PC-3 (cell line): ENCODE measurements at regions of chr14 and their contacts with region 1.

Region 1: DNA sequence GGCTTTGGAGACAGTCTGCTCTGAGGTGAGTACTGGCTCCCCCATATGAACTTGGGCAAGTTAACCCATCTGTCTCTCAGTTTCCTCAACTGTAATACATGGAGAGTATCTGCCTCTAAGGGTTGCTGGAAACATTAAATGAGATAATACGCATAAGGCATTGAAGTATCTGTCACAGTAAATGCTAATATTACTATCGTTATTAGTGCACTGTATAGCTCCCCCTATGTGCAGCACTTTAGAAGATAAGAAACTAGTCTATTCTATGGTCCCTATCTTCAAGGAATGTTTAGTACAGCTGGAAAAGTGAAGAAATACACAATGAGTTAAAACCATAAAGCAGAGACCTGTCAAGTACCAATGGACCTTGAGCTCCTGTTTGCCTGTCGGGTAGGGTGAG is 51.7 kb upstream of the CFL2 start:
- DNase-seq: peak; percentile 47
- ATAC-seq: peak; percentile 37; the same call in 1 of the 2 replicates
- H3K4me3 ChIP-seq: no peak overlapping the region
- H3K27ac ChIP-seq: no peak overlapping the region
- H3K4me1 ChIP-seq: no peaks in the 10 kb centered on the region
- H3K27me3 ChIP-seq: no peaks in the 10 kb centered on the region
- CTCF ChIP-seq: peak; percentile 74

Region 2: DNA sequence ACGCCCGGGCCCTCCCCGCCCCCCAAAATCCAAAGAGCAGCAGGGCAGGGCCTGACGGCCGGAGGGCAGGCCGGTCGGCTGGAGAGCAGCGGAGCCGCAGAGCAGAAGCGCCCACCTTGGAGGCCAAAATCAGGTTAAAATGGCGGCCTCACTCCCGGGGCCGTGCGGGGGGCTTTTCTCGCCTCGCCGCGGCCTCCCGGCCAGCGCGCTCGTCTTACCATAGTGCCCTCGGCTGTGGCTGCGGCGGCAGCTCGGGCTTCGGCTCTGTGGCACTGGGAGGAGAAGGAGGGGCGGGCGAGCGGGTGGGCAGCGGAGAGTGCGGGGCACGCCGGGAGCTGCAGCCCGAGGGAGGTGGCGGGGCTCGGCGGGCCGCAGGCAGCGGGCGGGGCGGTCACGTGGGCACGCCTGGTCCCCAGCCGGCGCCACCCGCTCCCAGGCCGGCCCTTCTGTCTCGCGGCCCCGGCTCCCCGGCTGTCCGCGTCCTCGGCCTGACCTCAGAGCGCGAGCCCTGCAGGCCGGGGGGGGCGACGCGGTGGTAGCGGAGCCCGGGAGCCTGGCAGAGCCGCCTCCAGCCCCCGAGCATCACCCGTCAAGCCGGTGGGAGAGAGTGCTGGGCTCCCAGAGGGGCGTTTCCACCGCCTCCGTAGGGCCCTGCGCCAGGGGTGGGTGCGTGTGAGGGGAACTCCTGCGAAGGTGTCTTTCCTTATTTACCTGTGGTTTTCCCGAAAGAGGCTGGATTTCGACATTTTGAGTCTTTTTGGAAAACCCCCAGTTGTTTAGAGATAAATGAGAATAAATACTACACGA is 51.5 kb before region 1 on chr14 and contains the start of gene CFL2:
- CTCF ChIA-PET with region 1: no interaction called
- POLR2A ChIA-PET with region 1: interaction called, 12 read pairs
- intact Hi-C with region 1: no loop called
- DNase-seq: peak; percentile 75
- ATAC-seq: peak; percentile 89
- H3K4me3 ChIP-seq: peak within 1 kb of the TSS; percentile 89
- H3K27ac ChIP-seq: peak within 1 kb of the TSS; percentile 51
- H3K4me1 ChIP-seq: peaks cover 33% of the 10 kb centered on the region
- H3K27me3 ChIP-seq: no peaks in the 10 kb centered on the region
- CTCF ChIP-seq: no peak
- total RNA-seq, gene CFL2: 88.4 and 98.0 TPM in 2 replicates